PC-3 (cell line): ENCODE measurements at regions of chr18 and their contacts with region 1.

Region 1: GRCh38 chr18:9516437-9517064 is 41.2 kb downstream of the RALBP1 start:
- DNase-seq: peak; percentile 79
- ATAC-seq: 0 out of 2 replicates have a peak, but pooled peaks have one; percentile 2
- H3K4me3 ChIP-seq: no peak overlapping the region
- H3K27ac ChIP-seq: no peak overlapping the region
- H3K4me1 ChIP-seq: peaks cover 36% of the 10 kb centered on the region
- H3K27me3 ChIP-seq: no peaks in the 10 kb centered on the region
- CTCF ChIP-seq: peak; percentile 97

Region 2: GRCh38 chr18:9147440-9148202 is 368.9 kb before region 1 on chr18:
- CTCF ChIA-PET with region 1: no interaction called
- POLR2A ChIA-PET with region 1: interaction called, 5 read pairs
- intact Hi-C with region 1: loop called (anchors 5 kb)
- DNase-seq: peak; percentile 78
- ATAC-seq: peak; percentile 90
- H3K4me3 ChIP-seq: no peak overlapping the region
- H3K27ac ChIP-seq: peak overlapping the region; percentile 17
- H3K4me1 ChIP-seq: peaks cover 6% of the 10 kb centered on the region
- H3K27me3 ChIP-seq: no peaks in the 10 kb centered on the region
- CTCF ChIP-seq: peak; percentile 94

Region 3: GRCh38 chr18:9296233-9297006 is 220.1 kb before region 1 on chr18:
- CTCF ChIA-PET with region 1: no interaction called
- POLR2A ChIA-PET with region 1: interaction called, 3 read pairs
- intact Hi-C with region 1: loop called (anchors 1 kb)
- DNase-seq: peak; percentile 82
- ATAC-seq: peak; percentile 98
- H3K4me3 ChIP-seq: no peak overlapping the region
- H3K27ac ChIP-seq: peak overlapping the region; percentile 31; the same call in 1 of the 2 replicates
- H3K4me1 ChIP-seq: peaks cover 13% of the 10 kb centered on the region
- H3K27me3 ChIP-seq: no peaks in the 10 kb centered on the region
- CTCF ChIP-seq: no peak

Region 4: GRCh38 chr18:9366192-9366591 is 150.4 kb before region 1 on chr18:
- CTCF ChIA-PET with region 1: interaction called, 5 read pairs
- POLR2A ChIA-PET with region 1: no interaction called
- intact Hi-C with region 1: loop called (anchors 10 kb)
- DNase-seq: peak; percentile 90
- ATAC-seq: peak; percentile 48
- H3K4me3 ChIP-seq: no peak overlapping the region
- H3K27ac ChIP-seq: 0 out of 2 replicates have a peak overlapping the region, but pooled peaks have one; percentile 72
- H3K4me1 ChIP-seq: peaks cover 42% of the 10 kb centered on the region
- H3K27me3 ChIP-seq: no peaks in the 10 kb centered on the region
- CTCF ChIP-seq: peak; percentile 79

Region 5: GRCh38 chr18:9474983-9475642 is 41.4 kb before region 1 on chr18 and contains the start of gene RALBP1:
- CTCF ChIA-PET with region 1: no interaction called
- POLR2A ChIA-PET with region 1: interaction called, 4 read pairs
- intact Hi-C with region 1: loop called (anchors 2 kb)
- DNase-seq: peak; percentile 99
- ATAC-seq: peak; percentile 93
- H3K4me3 ChIP-seq: peak within 1 kb of the TSS; percentile 93
- H3K27ac ChIP-seq: peak within 1 kb of the TSS; percentile 92
- H3K4me1 ChIP-seq: peaks cover 15% of the 10 kb centered on the region
- H3K27me3 ChIP-seq: no peaks in the 10 kb centered on the region
- CTCF ChIP-seq: peak; percentile 33
- total RNA-seq, gene RALBP1: 89.8 and 94.3 TPM in 2 replicates